GM12878 (cell line): ENCODE measurements at regions of chr11 and their contacts with region 1.

Region 1: DNA sequence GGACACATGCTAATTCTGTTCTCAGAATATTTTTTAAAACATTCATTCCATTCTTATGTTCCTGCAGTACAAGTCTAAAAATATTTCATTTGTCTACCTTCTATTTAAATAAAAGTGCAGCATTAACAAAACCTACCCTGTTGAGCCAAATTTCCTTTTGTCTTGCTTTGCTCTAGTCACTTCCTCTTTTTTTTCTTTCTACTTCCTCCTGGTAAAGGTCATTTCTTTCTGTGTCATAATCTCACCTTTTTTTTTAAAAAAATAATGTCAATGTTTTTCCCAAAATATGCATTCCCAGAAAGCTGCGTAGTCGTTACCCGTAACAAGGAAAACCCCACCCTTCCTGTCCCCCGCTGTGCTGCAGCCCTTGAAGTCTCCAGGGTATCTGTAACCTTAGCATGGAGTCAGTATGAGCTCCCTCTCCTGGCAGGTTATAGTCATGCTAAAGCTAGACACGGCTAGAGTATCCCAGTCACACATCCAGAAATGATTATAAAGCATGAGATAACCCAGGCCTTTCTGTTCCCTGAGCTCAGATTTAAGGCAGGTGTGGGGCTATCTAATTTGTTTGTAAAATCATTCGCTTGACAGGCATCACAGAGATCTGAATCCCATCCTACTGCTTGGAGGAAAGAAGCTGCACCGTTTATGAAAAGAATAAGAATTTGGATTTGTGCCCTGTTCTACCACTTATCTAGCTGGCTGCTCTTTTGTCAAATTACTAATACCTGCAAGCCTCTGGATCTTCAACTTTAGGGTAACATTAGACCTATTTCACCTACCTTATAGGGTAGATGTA is 51.1 kb upstream of the EED start:
- DNase-seq: peak; percentile 78
- ATAC-seq: peak; percentile 97
- H3K4me3 ChIP-seq: peak overlapping the region; percentile 49; the same call in 1 of the 2 replicates
- H3K27ac ChIP-seq: peak overlapping the region; percentile 34
- H3K4me1 ChIP-seq: peaks cover 14% of the 10 kb centered on the region
- H3K27me3 ChIP-seq: no peaks in the 10 kb centered on the region
- CTCF ChIP-seq: peak; percentile 65 to 83 (median 76)
- EP300 ChIP-seq: peak in 1 of 2 experiments; percentile 48; a peak in 1 of 4 replicates
- POLR2A ChIP-seq: no peak
- RAD21 ChIP-seq: peak; percentile 85

Region 2: DNA sequence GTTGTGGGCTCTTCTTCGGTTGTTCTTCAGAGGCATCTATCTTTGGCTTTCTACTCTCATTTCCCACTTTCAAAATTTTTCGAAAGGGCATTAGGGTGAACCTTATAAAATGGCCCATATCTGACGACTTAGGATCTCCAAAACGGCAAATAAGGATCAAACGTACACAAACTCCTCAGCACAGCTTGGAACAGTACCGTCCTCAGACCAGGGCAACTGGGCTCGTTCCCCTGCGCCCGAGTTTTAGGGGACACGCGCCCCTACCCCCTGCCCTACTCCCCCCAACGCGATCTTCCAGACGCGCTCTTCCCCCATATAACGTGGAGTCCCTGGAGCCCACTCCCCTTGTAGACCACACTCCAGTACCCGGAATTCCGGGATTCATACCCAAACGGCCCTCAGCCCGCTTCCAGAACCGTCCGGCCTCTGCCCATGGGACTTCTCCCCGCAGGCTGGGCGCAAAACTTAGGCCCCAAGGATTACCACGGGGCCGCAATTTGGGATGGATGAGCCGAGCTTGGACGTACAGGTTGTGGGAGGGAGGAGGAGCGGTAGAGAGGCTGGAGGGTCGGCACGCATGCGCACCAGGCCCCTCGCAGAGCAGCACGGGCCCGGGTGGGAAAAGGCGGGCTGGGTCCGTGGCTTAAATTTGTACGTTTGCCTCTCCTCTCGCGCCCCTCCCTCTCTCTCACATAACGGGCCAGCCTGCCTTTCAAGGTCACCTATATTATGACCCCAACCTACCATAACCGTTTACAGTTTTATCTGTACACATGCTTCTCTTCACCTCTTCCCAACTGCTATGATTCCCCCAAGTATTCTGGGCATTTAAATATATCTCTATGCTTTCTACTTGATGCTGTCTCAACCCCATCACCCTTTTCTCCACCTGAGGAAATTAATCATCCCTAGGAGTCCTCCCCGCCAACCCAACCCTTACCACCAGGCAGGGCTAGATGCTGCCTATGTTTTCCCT is 510.9 kb before region 1 on chr11:
- CTCF ChIA-PET with region 1: no interaction called
- POLR2A ChIA-PET with region 1: no interaction called
- RAD21 ChIA-PET with region 1: no interaction called
- SMC1A ChIA-PET with region 1: no interaction called
- in situ Hi-C with region 1: no loop called
- intact Hi-C with region 1: no loop called
- DNase-seq: no peak
- ATAC-seq: peak; percentile 95
- H3K4me3 ChIP-seq: peak overlapping the region; percentile 95
- H3K27ac ChIP-seq: peak overlapping the region; percentile 47
- H3K4me1 ChIP-seq: peaks cover 5% of the 10 kb centered on the region; the same call in 1 of the 2 replicates
- H3K27me3 ChIP-seq: 0 out of 4 replicates have a peak, but pooled peaks cover 0 to 3% of the 10 kb centered on the region in 2 experiments
- CTCF ChIP-seq: no peak
- EP300 ChIP-seq: no peak
- POLR2A ChIP-seq: peak; percentile 72
- RAD21 ChIP-seq: no peak

Region 3: DNA sequence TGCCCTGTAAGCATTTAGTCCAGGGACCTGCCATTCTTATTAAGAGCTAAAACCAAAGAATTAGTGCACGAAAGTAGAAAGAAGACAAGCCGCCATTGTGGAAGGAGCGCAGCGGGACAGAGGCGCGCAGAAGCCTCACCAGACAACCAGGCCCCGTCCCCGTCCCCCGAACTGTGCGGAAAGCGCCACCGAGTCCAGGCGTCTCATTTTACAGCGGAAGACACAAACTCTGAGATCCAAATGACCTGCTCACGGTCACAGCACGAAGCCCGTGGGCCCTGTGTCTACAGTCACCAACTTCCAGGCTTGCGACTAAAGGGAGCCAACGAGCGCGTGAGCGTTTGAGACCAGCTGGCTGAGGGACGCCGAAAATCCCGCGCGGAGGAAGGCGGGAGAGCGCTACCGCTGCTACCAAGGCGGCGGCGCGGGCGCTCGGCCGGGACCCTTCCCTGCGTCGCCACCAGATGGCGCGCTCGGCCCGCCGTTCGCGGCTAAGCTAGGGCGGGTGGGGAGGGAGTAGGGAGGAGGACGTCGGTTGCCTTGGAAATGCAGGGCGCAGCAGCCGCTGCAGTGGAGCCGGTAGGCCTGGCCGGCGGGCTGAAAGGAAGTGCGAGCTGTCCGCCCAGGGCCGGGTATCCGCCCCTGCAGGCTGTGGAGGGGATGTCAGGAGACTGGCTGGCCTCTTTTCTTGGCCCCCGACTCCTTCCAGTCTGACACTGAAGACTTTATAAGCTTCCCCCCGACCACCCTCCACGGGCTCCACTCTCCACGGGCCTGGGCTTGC is 338.7 kb before region 1 on chr11:
- CTCF ChIA-PET with region 1: interaction called, 10 read pairs
- POLR2A ChIA-PET with region 1: no interaction called
- RAD21 ChIA-PET with region 1: interaction called, 10 read pairs
- SMC1A ChIA-PET with region 1: no interaction called
- in situ Hi-C with region 1: no loop called
- intact Hi-C with region 1: no loop called
- DNase-seq: peak; percentile 57
- ATAC-seq: peak; percentile 100
- H3K4me3 ChIP-seq: peak overlapping the region; percentile 75
- H3K27ac ChIP-seq: peak overlapping the region; percentile 27; the same call in 1 of the 2 replicates
- H3K4me1 ChIP-seq: peaks cover 8% of the 10 kb centered on the region
- H3K27me3 ChIP-seq: no peaks in the 10 kb centered on the region
- CTCF ChIP-seq: peak; percentile 77 to 95 (median 82)
- EP300 ChIP-seq: no peak
- POLR2A ChIP-seq: peak; percentile 71
- RAD21 ChIP-seq: peak; percentile 83

Region 4: GRCh38 chr11:86041975-86042378 is 151.5 kb before region 1 on chr11:
- CTCF ChIA-PET with region 1: interaction called, 154 read pairs
- POLR2A ChIA-PET with region 1: interaction called, 4 read pairs
- RAD21 ChIA-PET with region 1: interaction called, 77 read pairs
- SMC1A ChIA-PET with region 1: interaction called, 126 read pairs
- in situ Hi-C with region 1: loop called (anchors 5 kb)
- intact Hi-C with region 1: loop called (anchors 1 kb)
- DNase-seq: peak; percentile 60
- ATAC-seq: peak; percentile 83
- H3K4me3 ChIP-seq: no peak overlapping the region
- H3K27ac ChIP-seq: no peak overlapping the region
- H3K4me1 ChIP-seq: peaks cover 42% of the 10 kb centered on the region
- H3K27me3 ChIP-seq: no peaks in the 10 kb centered on the region
- CTCF ChIP-seq: peak; percentile 77 to 89 (median 81)
- EP300 ChIP-seq: no peak
- POLR2A ChIP-seq: no peak
- RAD21 ChIP-seq: peak; percentile 97

Region 5: GRCh38 chr11:86103808-86104207 is 89.7 kb before region 1 on chr11:
- CTCF ChIA-PET with region 1: interaction called, 11 read pairs
- POLR2A ChIA-PET with region 1: no interaction called
- RAD21 ChIA-PET with region 1: no interaction called
- SMC1A ChIA-PET with region 1: interaction called, 4 read pairs
- in situ Hi-C with region 1: no loop called
- intact Hi-C with region 1: no loop called
- DNase-seq: no peak
- ATAC-seq: no peak
- H3K4me3 ChIP-seq: no peak overlapping the region
- H3K27ac ChIP-seq: no peak overlapping the region
- H3K4me1 ChIP-seq: no peaks in the 10 kb centered on the region
- H3K27me3 ChIP-seq: no peaks in the 10 kb centered on the region
- CTCF ChIP-seq: no peak
- EP300 ChIP-seq: no peak
- POLR2A ChIP-seq: no peak
- RAD21 ChIP-seq: no peak

Region 6: GRCh38 chr11:86145439-86146156 is 47.9 kb before region 1 on chr11:
- CTCF ChIA-PET with region 1: interaction called, 17 read pairs
- POLR2A ChIA-PET with region 1: no interaction called
- RAD21 ChIA-PET with region 1: interaction called, 8 read pairs
- SMC1A ChIA-PET with region 1: interaction called, 7 read pairs
- in situ Hi-C with region 1: no loop called
- intact Hi-C with region 1: no loop called
- DNase-seq: no peak
- ATAC-seq: peak; percentile 47
- H3K4me3 ChIP-seq: no peak overlapping the region
- H3K27ac ChIP-seq: no peak overlapping the region
- H3K4me1 ChIP-seq: no peaks in the 10 kb centered on the region
- H3K27me3 ChIP-seq: no peaks in the 10 kb centered on the region
- CTCF ChIP-seq: no peak
- EP300 ChIP-seq: no peak
- POLR2A ChIP-seq: no peak
- RAD21 ChIP-seq: no peak

Region 7: DNA sequence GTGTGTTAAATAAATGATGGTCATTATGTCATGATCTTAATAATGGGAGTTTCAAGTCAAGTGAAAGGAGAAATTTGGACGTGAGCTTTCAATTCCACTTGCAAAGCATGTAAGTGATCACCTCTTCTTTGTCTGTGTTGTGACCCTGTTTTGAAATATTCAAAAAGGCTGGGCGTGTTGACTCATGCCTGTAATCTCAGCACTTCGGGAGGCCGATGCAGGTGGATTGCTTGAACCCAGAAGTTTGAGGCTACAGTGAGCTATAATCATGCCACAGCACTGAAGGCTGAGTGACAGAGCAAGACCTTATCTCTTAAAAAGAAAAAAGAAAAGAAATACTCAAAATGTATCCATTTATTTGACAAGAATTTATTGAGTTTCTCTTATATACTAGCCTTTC is 18.1 kb after region 1 on chr11:
- CTCF ChIA-PET with region 1: interaction called, 15 read pairs
- POLR2A ChIA-PET with region 1: interaction called, 3 read pairs
- RAD21 ChIA-PET with region 1: interaction called, 17 read pairs
- SMC1A ChIA-PET with region 1: interaction called, 13 read pairs
- in situ Hi-C with region 1: no loop called
- intact Hi-C with region 1: no loop called
- DNase-seq: peak; percentile 74
- ATAC-seq: peak; percentile 69
- H3K4me3 ChIP-seq: no peak overlapping the region
- H3K27ac ChIP-seq: no peak overlapping the region
- H3K4me1 ChIP-seq: peaks cover 48% of the 10 kb centered on the region
- H3K27me3 ChIP-seq: no peaks in the 10 kb centered on the region
- CTCF ChIP-seq: no peak
- EP300 ChIP-seq: 0 out of 4 replicates have a peak, but pooled peaks of 1 of the 2 experiments have one; percentile 39
- POLR2A ChIP-seq: no peak
- RAD21 ChIP-seq: no peak